AG04449 (cell line): ENCODE measurements at regions of chr1 and their contacts with region 1.

Region 1: DNA sequence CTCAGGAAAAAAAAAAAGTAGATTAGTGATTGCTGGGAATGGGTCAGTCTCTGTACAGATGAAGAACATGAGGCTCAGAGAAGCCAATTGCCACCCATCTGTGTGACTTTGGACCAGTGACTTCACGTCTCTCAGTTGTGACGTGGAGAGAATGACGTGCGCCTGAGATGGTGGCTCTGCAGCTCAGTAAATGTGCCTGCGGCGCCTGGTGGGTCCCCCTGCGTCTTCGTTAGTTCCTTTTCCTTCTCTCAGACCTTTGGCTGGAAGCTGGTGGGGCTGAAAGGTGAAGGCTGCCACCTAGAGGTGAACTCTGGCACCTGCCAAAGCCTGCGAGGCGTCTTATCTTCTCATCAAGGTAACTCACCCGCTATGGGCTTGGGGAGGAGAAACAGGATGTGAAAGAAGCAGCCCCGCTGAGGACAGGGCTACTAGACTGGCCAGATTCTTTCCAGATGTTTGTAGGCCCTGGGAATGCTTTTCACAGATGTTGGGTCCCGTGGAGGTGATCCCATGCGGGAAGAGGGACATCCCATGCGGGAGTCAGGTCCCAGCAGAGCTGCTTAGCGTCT is 8.7 kb upstream of the E2F2 start:
- DNase-seq: no peak
- H3K4me3 ChIP-seq: peak overlapping the region; percentile 33
- CTCF ChIP-seq: peak; percentile 93

Region 2: GRCh38 chr1:22976461-22977243 is 563.1 kb before region 1 on chr1:
- CTCF ChIA-PET with region 1: interaction called, 26 read pairs
- POLR2A ChIA-PET with region 1: no interaction called
- DNase-seq: peak; percentile 44
- H3K4me3 ChIP-seq: no peak overlapping the region
- CTCF ChIP-seq: peak; percentile 85

Region 3: GRCh38 chr1:23475134-23475628 is 64.6 kb before region 1 on chr1:
- CTCF ChIA-PET with region 1: interaction called, 11 read pairs
- POLR2A ChIA-PET with region 1: no interaction called
- DNase-seq: peak; percentile 79
- H3K4me3 ChIP-seq: no peak overlapping the region
- CTCF ChIP-seq: no peak

Region 4: DNA sequence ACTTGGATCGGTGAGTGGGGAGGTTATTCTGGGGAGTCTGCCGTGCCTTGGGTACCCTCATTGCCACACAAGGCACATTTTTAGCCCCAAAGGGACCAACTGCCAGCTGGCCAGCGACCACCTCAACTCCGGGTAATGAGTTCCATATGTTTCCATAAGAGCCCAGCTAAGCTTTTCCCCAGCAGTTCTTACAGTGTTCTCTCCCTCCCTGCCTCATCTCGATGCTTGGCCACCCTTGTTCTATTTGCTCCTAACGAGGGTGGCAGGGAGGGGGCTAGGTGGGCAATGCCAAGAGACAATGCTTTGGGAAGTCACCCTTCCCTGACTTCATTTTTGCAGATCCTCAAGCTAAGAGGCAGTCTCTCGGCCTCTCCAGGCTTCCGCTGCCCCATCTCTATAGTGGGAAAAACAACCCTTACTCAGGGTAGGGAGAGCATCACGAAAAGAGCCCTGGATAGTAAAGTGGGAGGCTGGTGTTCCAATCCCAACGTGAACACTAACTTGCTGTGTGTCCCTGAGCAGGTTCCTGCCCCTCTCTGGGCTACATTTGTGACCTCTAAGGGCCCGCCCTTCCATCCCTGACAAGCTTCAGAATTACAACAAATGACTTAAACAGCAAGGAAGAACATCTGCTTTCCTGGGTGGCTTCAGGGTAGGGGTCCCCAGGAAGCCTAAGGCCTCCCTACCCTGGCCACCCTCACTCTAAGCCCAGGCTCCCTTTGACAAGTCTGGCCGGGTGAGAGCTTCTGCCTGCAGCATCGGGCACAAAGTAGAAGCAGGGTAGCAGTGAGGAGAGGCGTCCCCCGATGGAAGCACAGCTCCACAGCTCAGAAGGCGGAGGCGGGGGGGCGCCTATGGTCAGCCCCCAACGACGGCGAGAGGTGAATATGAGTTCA is 13.7 kb after region 1 on chr1:
- CTCF ChIA-PET with region 1: interaction called, 54 read pairs
- POLR2A ChIA-PET with region 1: interaction called, 6 read pairs
- DNase-seq: no peak
- H3K4me3 ChIP-seq: no peak overlapping the region
- CTCF ChIP-seq: no peak

Region 5: GRCh38 chr1:23559136-23559984 is 19.6 kb after region 1 on chr1 and contains the start of gene ID3:
- CTCF ChIA-PET with region 1: interaction called, 54 read pairs
- POLR2A ChIA-PET with region 1: interaction called, 6 read pairs
- DNase-seq: peak; percentile 91
- H3K4me3 ChIP-seq: peak within 1 kb of the TSS; percentile 87
- CTCF ChIP-seq: no peak

Region 6: DNA sequence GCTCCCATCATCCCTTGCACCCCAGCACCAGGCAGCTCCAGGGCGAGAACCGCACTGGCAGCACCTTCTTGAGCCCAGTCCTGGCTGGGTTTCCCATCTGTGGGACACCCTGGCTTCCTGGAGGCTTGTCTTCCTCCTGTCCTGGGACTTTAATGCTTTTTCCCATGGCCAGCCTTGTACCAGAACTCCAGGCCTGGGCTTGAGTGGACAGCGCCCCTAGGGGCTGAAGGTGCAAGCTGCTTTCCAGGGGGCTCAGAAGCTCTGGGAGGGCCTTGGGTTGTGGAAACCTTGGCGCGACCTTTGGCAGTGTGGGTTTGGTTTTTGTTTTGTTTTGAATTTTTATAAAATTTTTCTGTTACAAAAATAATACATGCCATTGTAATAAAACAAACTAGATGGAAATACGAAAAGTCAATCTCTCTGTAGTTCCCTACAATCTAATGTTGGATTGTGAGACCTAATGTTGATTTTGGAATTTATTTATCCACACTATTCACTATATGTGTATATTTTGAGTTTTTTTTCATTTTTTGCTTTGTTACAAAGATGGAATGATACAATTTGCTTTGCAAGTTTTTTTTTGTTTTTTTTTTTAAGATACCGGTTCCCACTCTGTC is 118.0 kb after region 1 on chr1:
- CTCF ChIA-PET with region 1: interaction called, 110 read pairs
- POLR2A ChIA-PET with region 1: no interaction called
- DNase-seq: no peak
- H3K4me3 ChIP-seq: no peak overlapping the region
- CTCF ChIP-seq: peak; percentile 90

Region 7: DNA sequence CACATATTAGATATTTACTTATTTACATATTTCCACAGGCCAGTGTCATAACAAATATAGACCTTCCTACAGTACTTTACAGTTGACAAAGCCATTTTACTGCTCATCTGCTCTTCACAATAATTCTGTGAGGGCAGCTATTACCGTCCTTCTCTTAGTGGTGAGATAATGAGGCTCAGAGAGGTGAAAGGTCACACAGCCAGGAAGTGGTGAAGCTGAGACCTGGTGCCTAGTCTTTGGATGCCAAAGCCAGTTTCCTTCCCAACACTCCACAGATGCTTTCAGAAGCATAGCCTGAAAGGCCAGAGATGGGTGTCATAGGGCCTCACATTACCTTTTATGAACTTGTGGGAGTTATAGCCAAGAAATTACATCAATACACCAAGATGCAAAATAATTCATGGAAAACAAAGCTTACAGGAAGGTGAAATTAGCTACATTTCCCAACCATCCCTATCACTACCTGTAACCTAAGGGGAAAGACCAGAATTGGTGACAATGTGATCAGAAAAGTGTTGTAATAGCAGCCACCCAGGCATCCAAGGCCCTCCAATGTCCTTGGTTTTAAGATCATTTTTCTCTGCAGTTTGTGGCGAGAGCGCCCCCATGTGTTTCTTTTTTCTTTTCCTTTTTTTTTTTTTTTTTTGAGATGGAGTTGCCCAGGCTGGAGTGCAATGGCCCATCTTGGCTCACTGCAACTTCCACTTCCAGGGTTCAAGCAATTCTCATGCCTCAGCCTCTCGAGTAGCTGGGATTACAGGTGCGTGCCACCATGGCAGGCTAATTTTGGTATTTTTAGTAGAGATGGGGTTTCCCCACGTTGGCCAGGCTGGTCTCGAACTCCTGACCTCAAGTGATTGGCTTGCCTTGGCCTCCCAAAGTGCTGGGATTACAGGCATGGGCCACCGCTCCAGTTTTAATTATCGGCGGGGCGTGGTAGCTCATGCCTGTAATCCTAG is 125.3 kb after region 1 on chr1:
- CTCF ChIA-PET with region 1: interaction called, 110 read pairs
- POLR2A ChIA-PET with region 1: no interaction called
- DNase-seq: no peak
- H3K4me3 ChIP-seq: no peak overlapping the region
- CTCF ChIP-seq: peak; percentile 1